GM12878 (cell line): ENCODE measurements at regions of chr1 and their contacts with region 1.

Region 1: GRCh38 chr1:32933742-32934322 is 30.8 kb downstream of the RNF19B start:
- DNase-seq: no peak
- ATAC-seq: peak; percentile 46
- H3K4me3 ChIP-seq: no peak overlapping the region
- H3K27ac ChIP-seq: no peak overlapping the region
- H3K4me1 ChIP-seq: no peaks in the 10 kb centered on the region
- H3K27me3 ChIP-seq: no peaks in the 10 kb centered on the region
- CTCF ChIP-seq: no peak
- EP300 ChIP-seq: no peak
- POLR2A ChIP-seq: no peak
- RAD21 ChIP-seq: no peak

Region 2: GRCh38 chr1:32876341-32877210 is 57.3 kb before region 1 on chr1:
- CTCF ChIA-PET with region 1: interaction called, 16 read pairs
- POLR2A ChIA-PET with region 1: no interaction called
- RAD21 ChIA-PET with region 1: no interaction called
- SMC1A ChIA-PET with region 1: no interaction called
- in situ Hi-C with region 1: no loop called
- intact Hi-C with region 1: no loop called
- DNase-seq: no peak
- ATAC-seq: peak; percentile 90
- H3K4me3 ChIP-seq: no peak overlapping the region
- H3K27ac ChIP-seq: no peak overlapping the region
- H3K4me1 ChIP-seq: peaks cover 10% of the 10 kb centered on the region
- H3K27me3 ChIP-seq: peaks cover 5% of the 10 kb centered on the region in 2 experiments; a peak in 2 of 4 replicates
- CTCF ChIP-seq: peak; percentile 79 to 98 (median 95)
- EP300 ChIP-seq: no peak
- POLR2A ChIP-seq: no peak
- RAD21 ChIP-seq: peak; percentile 51; the same call in 1 of the 2 replicates

Region 3: DNA sequence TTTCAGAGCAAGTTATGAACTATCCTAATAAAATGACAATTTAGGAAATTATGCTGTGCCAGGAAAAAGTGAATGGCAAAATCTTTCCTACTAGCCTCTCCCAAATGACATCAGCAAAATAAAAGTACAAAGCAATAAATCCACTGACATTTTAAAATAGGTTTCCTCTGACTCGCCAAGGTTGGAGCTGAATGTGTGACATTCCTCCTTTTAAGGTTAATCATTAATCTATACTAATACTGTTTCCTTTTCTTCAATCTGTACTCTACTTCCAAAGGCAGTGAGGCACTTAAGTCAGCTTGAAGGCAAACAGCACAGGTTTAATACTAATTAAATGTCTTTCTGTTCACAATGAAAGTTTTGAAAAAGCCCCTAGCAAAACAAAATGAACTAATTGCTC is 15.1 kb after region 1 on chr1:
- CTCF ChIA-PET with region 1: interaction called, 21 read pairs
- POLR2A ChIA-PET with region 1: no interaction called
- RAD21 ChIA-PET with region 1: interaction called, 5 read pairs
- SMC1A ChIA-PET with region 1: interaction called, 5 read pairs
- in situ Hi-C with region 1: no loop called
- intact Hi-C with region 1: no loop called
- DNase-seq: no peak
- ATAC-seq: no peak
- H3K4me3 ChIP-seq: no peak overlapping the region
- H3K27ac ChIP-seq: no peak overlapping the region
- H3K4me1 ChIP-seq: peaks cover 16% of the 10 kb centered on the region
- H3K27me3 ChIP-seq: no peaks in the 10 kb centered on the region
- CTCF ChIP-seq: no peak
- EP300 ChIP-seq: no peak
- POLR2A ChIP-seq: no peak
- RAD21 ChIP-seq: no peak

Region 4: DNA sequence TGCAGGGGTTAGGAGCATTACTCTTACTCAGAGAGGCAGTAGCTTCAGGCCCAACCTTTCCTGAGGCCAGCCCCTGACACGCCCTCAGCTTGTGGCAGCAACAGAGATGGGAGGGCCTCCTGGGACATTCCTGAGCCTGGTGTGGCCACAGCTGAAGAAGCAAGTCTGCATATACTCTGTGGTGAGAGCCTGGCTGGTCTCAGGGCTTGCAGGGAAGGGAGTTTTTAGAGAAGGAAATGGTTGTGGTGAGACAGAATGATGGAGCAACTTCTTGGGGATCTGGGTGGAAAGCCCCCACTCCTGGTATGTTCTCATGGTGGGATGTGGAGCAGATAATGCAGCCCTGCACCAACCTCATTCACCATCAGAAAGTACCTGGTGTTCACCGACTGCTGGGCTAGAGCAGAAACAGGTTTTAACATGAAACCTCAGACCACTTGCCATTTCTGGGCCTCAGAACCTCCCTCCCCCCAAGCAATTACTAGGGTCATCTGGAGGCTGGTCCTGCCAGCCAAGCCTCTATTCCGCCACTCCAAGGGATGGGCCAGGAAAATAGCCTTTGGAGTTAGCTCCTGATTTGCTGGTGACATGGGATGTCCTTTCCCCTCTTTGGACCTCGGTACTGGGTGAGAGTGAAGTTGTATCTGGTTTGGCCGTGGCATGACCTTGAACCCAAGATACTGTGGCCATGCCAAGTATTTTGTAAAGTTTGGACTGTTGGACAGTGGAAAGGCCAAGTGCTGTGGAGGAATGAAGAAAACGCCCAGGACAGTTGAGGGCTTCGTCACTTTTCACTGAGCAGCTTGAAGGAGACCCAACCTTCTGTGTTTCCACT is 58.9 kb after region 1 on chr1:
- CTCF ChIA-PET with region 1: interaction called, 9 read pairs
- POLR2A ChIA-PET with region 1: interaction called, 4 read pairs
- RAD21 ChIA-PET with region 1: interaction called, 18 read pairs
- SMC1A ChIA-PET with region 1: interaction called, 20 read pairs
- in situ Hi-C with region 1: no loop called
- intact Hi-C with region 1: no loop called
- DNase-seq: peak; percentile 98
- ATAC-seq: peak; percentile 90
- H3K4me3 ChIP-seq: peak overlapping the region; percentile 48; the same call in 1 of the 2 replicates
- H3K27ac ChIP-seq: peak overlapping the region; percentile 99
- H3K4me1 ChIP-seq: peaks cover 58% of the 10 kb centered on the region
- H3K27me3 ChIP-seq: no peaks in the 10 kb centered on the region
- CTCF ChIP-seq: no peak
- EP300 ChIP-seq: peak; percentile 58 to 91
- POLR2A ChIP-seq: no peak
- RAD21 ChIP-seq: no peak

Region 5: GRCh38 chr1:33022650-33023200 is 88.9 kb after region 1 on chr1:
- CTCF ChIA-PET with region 1: interaction called, 10 read pairs
- POLR2A ChIA-PET with region 1: no interaction called
- RAD21 ChIA-PET with region 1: interaction called, 3 read pairs
- SMC1A ChIA-PET with region 1: interaction called, 10 read pairs
- in situ Hi-C with region 1: no loop called
- intact Hi-C with region 1: no loop called
- DNase-seq: no peak
- ATAC-seq: no peak
- H3K4me3 ChIP-seq: no peak overlapping the region
- H3K27ac ChIP-seq: no peak overlapping the region
- H3K4me1 ChIP-seq: peaks cover 18% of the 10 kb centered on the region
- H3K27me3 ChIP-seq: no peaks in the 10 kb centered on the region
- CTCF ChIP-seq: no peak
- EP300 ChIP-seq: no peak
- POLR2A ChIP-seq: no peak
- RAD21 ChIP-seq: no peak

Region 6: GRCh38 chr1:33036526-33037503 is 103.0 kb after region 1 on chr1 and contains the start of gene AK2:
- CTCF ChIA-PET with region 1: interaction called, 10 read pairs
- POLR2A ChIA-PET with region 1: no interaction called
- RAD21 ChIA-PET with region 1: interaction called, 3 read pairs
- SMC1A ChIA-PET with region 1: interaction called, 53 read pairs
- in situ Hi-C with region 1: no loop called
- intact Hi-C with region 1: no loop called
- DNase-seq: peak; percentile 98
- ATAC-seq: peak; percentile 99
- H3K4me3 ChIP-seq: peak within 1 kb of the TSS; percentile 88
- H3K27ac ChIP-seq: peak within 1 kb of the TSS; percentile 87
- H3K4me1 ChIP-seq: peaks cover 8% of the 10 kb centered on the region
- H3K27me3 ChIP-seq: no peaks in the 10 kb centered on the region
- CTCF ChIP-seq: no peak
- EP300 ChIP-seq: no peak; a peak in 1 of 4 replicates
- POLR2A ChIP-seq: peak; percentile 92
- RAD21 ChIP-seq: no peak
- polyA plus RNA-seq, gene AK2: 52.3 to 80.3 TPM

Region 7: GRCh38 chr1:33080885-33081553 is 147.2 kb after region 1 on chr1 and contains the start of gene AZIN2:
- CTCF ChIA-PET with region 1: interaction called, 55 read pairs
- POLR2A ChIA-PET with region 1: interaction called, 3 read pairs
- RAD21 ChIA-PET with region 1: interaction called, 42 read pairs
- SMC1A ChIA-PET with region 1: interaction called, 34 read pairs
- in situ Hi-C with region 1: no loop called
- intact Hi-C with region 1: loop called (anchors 1 kb)
- DNase-seq: peak; percentile 61
- ATAC-seq: peak; percentile 100
- H3K4me3 ChIP-seq: peak within 1 kb of the TSS; percentile 63
- H3K27ac ChIP-seq: no peak within 1 kb of the TSS
- H3K4me1 ChIP-seq: no peaks in the 10 kb centered on the region
- H3K27me3 ChIP-seq: peaks cover 8 to 12% of the 10 kb centered on the region in 2 experiments
- CTCF ChIP-seq: no peak
- EP300 ChIP-seq: no peak
- POLR2A ChIP-seq: peak; percentile 84
- RAD21 ChIP-seq: no peak
- polyA plus RNA-seq, gene AZIN2: 0.02 to 0.05 TPM